Dorsolateral prefrontal cortex (tissue), 120 donors: ENCODE measurements at regions of chr10 and their contacts with region 1.

Region 1: DNA sequence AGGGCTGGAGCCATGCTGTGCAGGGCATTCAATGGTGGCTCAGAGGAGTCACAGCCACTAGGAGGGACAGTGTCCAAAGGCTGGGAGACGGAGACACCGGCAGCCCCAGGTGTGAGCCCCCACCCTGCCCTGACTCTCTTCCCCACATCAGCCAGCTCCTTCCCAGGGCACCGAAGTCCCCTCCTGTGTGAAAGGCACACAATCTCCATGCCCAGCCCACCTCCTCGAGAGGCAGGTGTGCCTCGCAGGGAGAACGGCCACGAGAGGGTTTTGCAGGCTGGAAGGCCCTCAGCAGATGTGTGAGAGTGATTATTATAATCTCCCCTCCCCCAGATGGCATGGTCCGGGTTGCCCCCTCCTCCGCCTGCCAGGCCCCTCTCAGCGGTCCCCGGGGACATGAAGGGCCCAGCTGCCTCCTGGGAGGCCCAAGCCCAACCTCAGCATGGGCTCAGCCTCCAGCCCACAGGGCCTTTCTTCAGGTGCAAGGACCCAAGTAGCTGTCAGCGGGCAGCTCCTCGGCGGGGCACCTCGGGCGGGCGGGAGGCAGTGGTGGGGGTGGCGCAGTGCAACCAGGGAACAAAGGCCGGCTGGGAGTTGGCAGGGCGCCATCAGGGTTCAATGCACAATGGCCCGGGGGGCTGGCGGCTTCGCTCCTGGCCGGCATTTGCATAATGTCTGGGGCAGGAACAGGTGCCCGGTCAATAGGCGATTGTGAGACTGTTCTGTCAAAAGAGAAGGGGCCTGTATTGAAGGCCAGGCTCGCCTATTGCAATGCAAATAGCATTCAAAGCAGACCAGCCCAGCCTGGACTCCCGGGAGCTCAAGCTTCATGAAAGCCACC is 155.3 kb upstream of the ZMIZ1 start:
- DNase-seq: peak; percentile 54 to 98 (median 94)
- H3K4me3 ChIP-seq: no peak overlapping the region
- H3K27ac ChIP-seq: peak overlapping the region in 51 of 59 donors; percentile 1 to 89 (median 70)
- H3K27me3 ChIP-seq: no peaks in the 10 kb centered on the region
- CTCF ChIP-seq: peak in 23 of 56 donors; percentile 5 to 59 (median 23)

Region 2: DNA sequence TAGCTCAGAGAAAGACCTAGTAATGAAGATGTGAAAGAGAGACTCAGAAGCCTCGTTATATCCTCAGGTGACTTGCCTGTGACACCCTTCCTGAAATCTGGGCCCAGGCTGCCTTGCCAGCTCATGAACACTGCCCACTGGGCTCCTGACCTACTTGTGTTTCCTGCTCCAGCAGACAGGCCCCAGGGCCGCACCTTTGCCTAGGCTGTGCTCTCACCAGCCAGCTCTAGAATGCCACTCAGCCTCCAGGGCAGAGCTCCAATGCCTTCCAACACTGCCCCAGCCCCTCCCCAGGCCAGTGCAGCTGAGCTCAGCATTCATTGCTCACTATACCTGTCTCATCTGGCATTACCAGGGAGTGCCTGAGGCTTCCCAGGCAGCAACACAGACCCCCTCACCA is 1081.2 kb before region 1 on chr10:
- intact Hi-C with region 1: no loop called
- DNase-seq: peak in 1 of 10 donors; percentile 72
- H3K4me3 ChIP-seq: no peak overlapping the region
- H3K27ac ChIP-seq: peak overlapping the region in 1 of 59 donors; percentile 13
- H3K27me3 ChIP-seq: no peaks in the 10 kb centered on the region
- CTCF ChIP-seq: no peak

Region 3: GRCh38 chr10:78047314-78047891 is 866.0 kb before region 1 on chr10:
- intact Hi-C with region 1: loop called in 1 of 2 experiments (anchors 5 kb)
- DNase-seq: peak; percentile 88 to 98 (median 92)
- H3K4me3 ChIP-seq: peak overlapping the region in 17 of 59 donors; percentile 10 to 32 (median 22)
- H3K27ac ChIP-seq: peak overlapping the region in 12 of 59 donors; percentile 19 to 66 (median 42)
- H3K27me3 ChIP-seq: no peaks in the 10 kb centered on the region
- CTCF ChIP-seq: peak; percentile 88 to 99 (median 94)

Region 4: DNA sequence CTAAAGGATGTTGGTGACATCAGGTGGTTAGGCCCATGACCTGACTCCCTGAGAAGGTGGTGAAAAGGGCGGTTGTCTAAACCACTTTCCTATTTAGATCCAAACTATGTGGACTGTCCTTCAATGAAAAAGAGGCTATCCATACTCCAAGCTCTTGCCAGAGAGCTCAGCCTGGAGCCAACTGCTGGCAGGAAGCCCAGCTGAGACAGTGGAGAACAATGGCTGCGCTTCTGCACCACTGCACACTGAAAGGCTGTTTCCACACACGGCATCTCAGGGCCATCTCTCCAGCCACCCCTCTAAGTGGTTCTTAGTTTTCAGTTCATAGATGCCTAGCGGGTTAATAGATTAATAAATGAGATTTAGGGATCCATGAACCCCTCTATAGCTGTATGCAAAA is 333.4 kb before region 1 on chr10:
- intact Hi-C with region 1: loop called in 1 of 2 experiments (anchors 10 kb)
- DNase-seq: peak; percentile 82 to 94 (median 87)
- H3K4me3 ChIP-seq: no peak overlapping the region
- H3K27ac ChIP-seq: peak overlapping the region in 53 of 59 donors; percentile 13 to 88 (median 67)
- H3K27me3 ChIP-seq: no peaks in the 10 kb centered on the region
- CTCF ChIP-seq: peak in 13 of 56 donors; percentile 8 to 50 (median 14)

Region 5: GRCh38 chr10:78856421-78856820 is 57.0 kb before region 1 on chr10:
- intact Hi-C with region 1: loop called (anchors 2 kb)
- DNase-seq: peak; percentile 19 to 93 (median 88)
- H3K4me3 ChIP-seq: no peak overlapping the region
- H3K27ac ChIP-seq: peak overlapping the region in 1 of 59 donors; percentile 29
- H3K27me3 ChIP-seq: no peaks in the 10 kb centered on the region
- CTCF ChIP-seq: peak in 12 of 56 donors; percentile 10 to 45 (median 24)

Region 6: DNA sequence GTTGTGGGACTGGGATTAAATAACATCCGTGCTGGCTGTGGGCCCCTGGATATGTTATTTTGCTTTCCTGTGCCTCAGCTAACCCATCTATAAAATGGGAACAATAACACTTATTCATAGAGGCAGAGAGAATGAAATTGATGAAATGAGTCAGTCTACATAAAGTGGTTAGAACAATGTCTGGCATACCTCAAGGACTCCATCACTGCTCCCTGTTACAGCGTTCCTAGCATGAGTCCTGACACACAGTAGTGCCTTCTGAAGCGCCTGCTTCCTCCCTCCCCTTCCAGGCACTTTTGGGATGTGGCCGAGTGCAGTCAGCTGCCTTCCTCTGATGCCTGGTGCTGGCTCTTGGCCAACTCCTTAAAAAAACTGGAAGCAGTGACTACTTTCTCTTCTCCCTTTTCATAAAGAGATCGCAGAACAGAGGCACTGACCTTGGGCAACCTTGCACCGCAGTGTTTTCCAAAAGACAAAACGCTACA is 46.9 kb after region 1 on chr10:
- intact Hi-C with region 1: loop called in 1 of 2 experiments (anchors 2 kb)
- DNase-seq: peak in 4 of 10 donors; percentile 37 to 69 (median 54)
- H3K4me3 ChIP-seq: no peak overlapping the region
- H3K27ac ChIP-seq: peak overlapping the region in 3 of 59 donors; percentile 10 to 38 (median 38)
- H3K27me3 ChIP-seq: no peaks in the 10 kb centered on the region
- CTCF ChIP-seq: no peak